Activated B cell treated with CpG ODN at 0.5 μM for 24 hours (primary cell): ENCODE measurements at regions of chr7 and their contacts with region 1.

Region 1: GRCh38 chr7:29488977-29489376 is 74.7 kb upstream of the PRR15 start:
- DNase-seq: no peak
- ATAC-seq: no peak
- H3K4me3 Mint-ChIP-seq: no peak overlapping the region
- H3K27ac Mint-ChIP-seq: no peak overlapping the region
- H3K4me1 Mint-ChIP-seq: no peaks in the 10 kb centered on the region
- H3K27me3 Mint-ChIP-seq: peaks cover 4% of the 10 kb centered on the region
- CTCF ChIP-seq: no peak

Region 2: GRCh38 chr7:28955718-28956619 is 533.0 kb before region 1 on chr7:
- CTCF ChIA-PET with region 1: no interaction called
- POLR2A ChIA-PET with region 1: no interaction called
- intact Hi-C with region 1: no loop called
- DNase-seq: peak; percentile 20
- ATAC-seq: peak; percentile 34
- H3K4me3 Mint-ChIP-seq: peak overlapping the region; percentile 56
- H3K27ac Mint-ChIP-seq: no peak overlapping the region
- H3K4me1 Mint-ChIP-seq: peaks cover 14% of the 10 kb centered on the region
- H3K27me3 Mint-ChIP-seq: peaks cover 50% of the 10 kb centered on the region
- CTCF ChIP-seq: no peak

Region 3: GRCh38 chr7:29408841-29409243 is 80.1 kb before region 1 on chr7:
- CTCF ChIA-PET with region 1: no interaction called
- POLR2A ChIA-PET with region 1: no interaction called
- intact Hi-C with region 1: no loop called
- DNase-seq: no peak
- ATAC-seq: peak; percentile 50
- H3K4me3 Mint-ChIP-seq: no peak overlapping the region
- H3K27ac Mint-ChIP-seq: no peak overlapping the region
- H3K4me1 Mint-ChIP-seq: no peaks in the 10 kb centered on the region
- H3K27me3 Mint-ChIP-seq: peaks cover 6% of the 10 kb centered on the region
- CTCF ChIP-seq: no peak

Region 4: DNA sequence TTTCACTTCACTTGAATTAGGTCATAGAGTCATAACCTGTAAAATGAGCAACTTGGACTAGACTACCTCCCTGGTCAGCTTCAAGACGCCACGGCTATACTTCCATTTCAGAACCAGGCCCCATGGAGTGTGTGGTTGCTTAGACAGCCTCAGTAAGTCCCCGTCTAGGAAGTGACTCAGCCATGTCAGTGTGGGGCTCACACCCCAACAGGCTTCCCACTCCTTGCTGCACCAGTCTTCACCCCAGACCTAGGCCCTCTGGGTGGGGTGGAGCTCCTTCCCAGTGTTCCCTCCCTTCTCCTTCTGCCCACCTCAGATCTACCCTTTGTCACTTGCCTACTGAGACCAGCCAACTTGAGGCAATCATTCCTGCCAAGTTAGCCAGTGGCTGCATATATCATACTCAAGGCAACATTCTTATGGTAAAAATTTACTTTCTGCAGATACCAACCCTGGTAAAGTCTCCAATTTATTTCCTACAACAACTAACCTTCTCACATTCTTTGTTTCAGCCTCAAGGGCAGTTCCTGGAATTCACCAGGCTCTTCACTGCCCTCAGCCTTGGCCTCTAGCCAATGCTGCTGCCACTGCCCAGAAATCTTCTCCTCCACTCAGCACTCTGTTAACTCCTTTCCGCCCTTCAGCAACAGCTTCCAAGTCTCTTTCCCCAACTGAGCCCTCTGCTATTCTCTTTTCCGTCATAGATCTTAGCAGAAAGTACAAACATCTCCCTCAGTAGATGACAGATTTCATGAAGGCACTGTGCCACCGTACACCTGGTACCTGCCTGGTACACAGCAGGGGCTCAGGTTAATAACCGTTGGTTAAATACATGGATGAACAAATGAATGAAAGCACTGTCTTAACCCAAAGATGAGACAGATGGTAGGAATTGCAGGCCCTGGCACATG is 764.2 kb after region 1 on chr7:
- CTCF ChIA-PET with region 1: no interaction called
- POLR2A ChIA-PET with region 1: no interaction called
- intact Hi-C with region 1: loop called (anchors 10 kb)
- DNase-seq: no peak
- ATAC-seq: no peak
- H3K4me3 Mint-ChIP-seq: no peak overlapping the region
- H3K27ac Mint-ChIP-seq: no peak overlapping the region
- H3K4me1 Mint-ChIP-seq: peaks cover 1% of the 10 kb centered on the region
- H3K27me3 Mint-ChIP-seq: no peaks in the 10 kb centered on the region
- CTCF ChIP-seq: no peak